HCT116 (cell line): ENCODE measurements at regions of chr18 and their contacts with region 1.

Region 1: GRCh38 chr18:3245853-3246634 is 1.6 kb upstream of the MYL12A start:
- DNase-seq: peak; percentile 75
- ATAC-seq: peak; percentile 64
- H3K4me3 ChIP-seq: peak overlapping the region; percentile 40 to 96
- H3K27ac ChIP-seq: peak overlapping the region; percentile 90
- H3K4me1 ChIP-seq: peaks cover 33 to 40% of the 10 kb centered on the region in 2 experiments
- H3K27me3 ChIP-seq: no peaks in the 10 kb centered on the region
- CTCF ChIP-seq: peak in 2 of 3 experiments; percentile 87 to 90; a peak in 4 of 6 replicates
- POLR2A ChIP-seq: no peak
- RAD21 ChIP-seq: no peak

Region 2: DNA sequence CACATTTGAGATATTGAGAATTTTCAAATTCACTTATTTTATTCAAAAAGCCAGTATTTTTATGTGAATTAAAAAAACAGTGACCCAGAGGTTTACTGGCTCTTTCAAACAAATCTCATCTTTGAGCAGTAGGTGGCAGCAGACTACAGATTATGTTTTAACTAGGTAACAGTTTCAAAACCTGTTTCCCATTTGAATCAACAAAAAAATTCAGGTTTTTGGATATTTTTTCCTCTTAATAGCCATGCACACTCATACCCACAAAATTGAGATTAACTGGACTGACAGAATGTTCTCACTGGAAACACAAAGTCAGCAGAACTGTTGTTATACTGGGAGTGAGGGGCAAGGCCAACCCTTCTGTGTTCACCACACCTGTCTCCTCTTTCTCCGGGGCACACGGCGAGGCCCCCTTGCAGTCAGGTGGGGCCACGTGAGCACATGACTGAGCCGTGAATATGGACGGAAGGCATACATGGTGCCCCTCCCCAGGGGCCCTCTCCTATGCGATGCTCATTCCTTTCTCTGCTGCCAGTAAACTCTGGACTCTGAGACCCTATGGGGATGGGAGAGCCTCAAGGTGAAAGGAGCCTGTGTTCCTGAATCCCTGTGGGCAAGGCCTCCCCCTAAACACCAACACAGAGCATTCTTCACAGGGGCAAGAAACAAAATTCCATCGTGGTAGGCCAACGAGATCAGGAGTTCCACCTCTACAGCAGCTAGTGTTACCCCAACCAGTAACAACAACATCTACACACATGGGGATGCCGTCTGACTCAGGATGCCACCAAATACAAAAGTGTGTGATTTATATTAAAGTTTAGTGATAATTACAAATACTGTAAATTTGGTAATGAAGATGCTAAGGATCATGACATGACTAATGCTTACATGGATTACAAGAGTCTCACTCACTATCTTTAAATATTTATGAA is 313.5 kb before region 1 on chr18:
- CTCF ChIA-PET with region 1: interaction called, 43 read pairs
- POLR2A ChIA-PET with region 1: interaction called, 4 read pairs
- RAD21 ChIA-PET with region 1: interaction called, 4 to 5 read pairs
- intact Hi-C with region 1: loop called (anchors 1 kb)
- DNase-seq: peak; percentile 34
- ATAC-seq: peak; percentile 63
- H3K4me3 ChIP-seq: no peak overlapping the region
- H3K27ac ChIP-seq: no peak overlapping the region
- H3K4me1 ChIP-seq: no peaks in the 10 kb centered on the region
- H3K27me3 ChIP-seq: no peaks in the 10 kb centered on the region
- CTCF ChIP-seq: peak; percentile 54 to 78 (median 75)
- POLR2A ChIP-seq: no peak
- RAD21 ChIP-seq: peak; percentile 80

Region 3: GRCh38 chr18:2948038-2948437 is 298.0 kb before region 1 on chr18:
- CTCF ChIA-PET with region 1: interaction called, 11 read pairs
- POLR2A ChIA-PET with region 1: interaction called, 4 read pairs
- RAD21 ChIA-PET with region 1: interaction called in 1 of 2 experiments, 6 read pairs
- intact Hi-C with region 1: no loop called
- DNase-seq: peak; percentile 7
- ATAC-seq: peak; percentile 55; the same call in 1 of the 2 replicates
- H3K4me3 ChIP-seq: no peak overlapping the region
- H3K27ac ChIP-seq: no peak overlapping the region
- H3K4me1 ChIP-seq: no peaks in the 10 kb centered on the region
- H3K27me3 ChIP-seq: no peaks in the 10 kb centered on the region
- CTCF ChIP-seq: peak; percentile 27 to 50 (median 36); a peak in 2 of 6 replicates
- POLR2A ChIP-seq: no peak
- RAD21 ChIP-seq: peak; percentile 42; the same call in 1 of the 2 replicates

Region 4: GRCh38 chr18:3012964-3013804 is 232.9 kb before region 1 on chr18 and contains the start of gene LPIN2:
- CTCF ChIA-PET with region 1: interaction called, 3 read pairs
- POLR2A ChIA-PET with region 1: interaction called, 3 read pairs
- RAD21 ChIA-PET with region 1: interaction called in 1 of 2 experiments, 3 read pairs
- intact Hi-C with region 1: loop called (anchors 5 kb)
- DNase-seq: peak; percentile 87
- ATAC-seq: peak; percentile 90
- H3K4me3 ChIP-seq: peak within 1 kb of the TSS; percentile 56 to 69
- H3K27ac ChIP-seq: peak within 1 kb of the TSS; percentile 80
- H3K4me1 ChIP-seq: peaks cover 23 to 33% of the 10 kb centered on the region in 2 experiments
- H3K27me3 ChIP-seq: no peaks in the 10 kb centered on the region
- CTCF ChIP-seq: no peak
- POLR2A ChIP-seq: peak; percentile 38
- RAD21 ChIP-seq: no peak
- total RNA-seq, gene LPIN2: 10.7 TPM

Region 5: GRCh38 chr18:3122861-3123260 is 123.2 kb before region 1 on chr18:
- CTCF ChIA-PET with region 1: interaction called, 9 read pairs
- POLR2A ChIA-PET with region 1: no interaction called
- RAD21 ChIA-PET with region 1: no interaction called
- intact Hi-C with region 1: loop called (anchors 2 kb)
- DNase-seq: no peak
- ATAC-seq: no peak
- H3K4me3 ChIP-seq: no peak overlapping the region
- H3K27ac ChIP-seq: no peak overlapping the region
- H3K4me1 ChIP-seq: peaks cover 0 to 8% of the 10 kb centered on the region in 2 experiments; a peak in 2 of 4 replicates
- H3K27me3 ChIP-seq: no peaks in the 10 kb centered on the region
- CTCF ChIP-seq: no peak
- POLR2A ChIP-seq: no peak
- RAD21 ChIP-seq: no peak

Region 6: DNA sequence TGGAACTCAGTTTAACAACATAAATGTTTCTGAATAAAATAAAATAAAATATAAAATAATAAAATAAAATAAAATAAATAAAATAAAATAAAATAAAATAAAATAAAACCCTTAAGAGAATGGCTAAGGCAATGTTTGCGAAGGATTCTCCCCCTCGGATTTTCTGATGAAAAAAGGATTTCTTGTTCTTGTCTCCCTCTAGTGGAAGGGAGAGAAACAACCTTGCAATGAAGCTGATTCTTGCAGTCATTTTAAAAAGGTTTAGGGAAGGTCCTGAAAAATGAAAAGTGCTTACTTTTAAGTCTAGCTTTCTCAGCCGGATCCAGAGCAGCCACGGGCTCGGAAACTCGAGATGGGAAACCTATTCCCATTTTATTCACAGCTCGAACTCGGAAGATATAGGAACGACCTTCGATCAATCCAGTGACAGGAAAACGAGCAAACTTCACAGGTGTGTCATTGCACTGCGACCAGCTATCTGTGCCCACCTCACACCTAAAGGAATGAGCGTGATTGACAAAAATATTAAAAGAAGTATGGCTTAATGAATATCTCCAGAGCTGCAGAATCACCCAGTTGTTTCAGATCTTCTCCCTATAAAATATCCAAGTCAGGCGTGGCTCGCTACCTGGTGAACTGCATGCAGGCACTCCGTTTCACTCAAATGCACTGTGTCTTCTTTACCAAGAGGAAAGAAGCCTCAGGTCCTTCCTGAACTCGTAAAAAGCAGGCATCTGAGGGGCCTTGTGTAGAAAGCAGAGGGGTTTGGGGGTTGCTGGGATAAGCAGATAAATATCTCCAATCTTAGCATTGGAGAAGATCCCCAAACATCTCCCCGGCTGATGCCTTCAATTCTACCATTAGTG is 94.4 kb before region 1 on chr18:
- CTCF ChIA-PET with region 1: interaction called, 13 read pairs
- POLR2A ChIA-PET with region 1: no interaction called
- RAD21 ChIA-PET with region 1: no interaction called
- intact Hi-C with region 1: loop called (anchors 2 kb)
- DNase-seq: no peak
- ATAC-seq: no peak
- H3K4me3 ChIP-seq: no peak overlapping the region
- H3K27ac ChIP-seq: no peak overlapping the region
- H3K4me1 ChIP-seq: no peaks in the 10 kb centered on the region
- H3K27me3 ChIP-seq: no peaks in the 10 kb centered on the region
- CTCF ChIP-seq: peak; percentile 46 to 72 (median 62); a peak in 5 of 6 replicates
- POLR2A ChIP-seq: no peak
- RAD21 ChIP-seq: peak; percentile 66

Region 7: GRCh38 chr18:3261371-3262246 is 15.6 kb after region 1 on chr18 and contains the start of gene MYL12B:
- CTCF ChIA-PET with region 1: interaction called, 4 read pairs
- POLR2A ChIA-PET with region 1: interaction called, 20 read pairs
- RAD21 ChIA-PET with region 1: no interaction called
- intact Hi-C with region 1: no loop called
- DNase-seq: peak; percentile 62
- ATAC-seq: peak; percentile 82
- H3K4me3 ChIP-seq: peak within 1 kb of the TSS; percentile 79 to 90
- H3K27ac ChIP-seq: peak within 1 kb of the TSS; percentile 89
- H3K4me1 ChIP-seq: peaks cover 36 to 45% of the 10 kb centered on the region in 2 experiments
- H3K27me3 ChIP-seq: no peaks in the 10 kb centered on the region
- CTCF ChIP-seq: no peak
- POLR2A ChIP-seq: peak; percentile 25
- RAD21 ChIP-seq: 0 out of 2 replicates have a peak, but pooled peaks have one; percentile 5
- total RNA-seq, gene MYL12B: 403 TPM